IMR-90 (cell line): ENCODE measurements at regions of chr3 and their contacts with region 1.

Region 1: DNA sequence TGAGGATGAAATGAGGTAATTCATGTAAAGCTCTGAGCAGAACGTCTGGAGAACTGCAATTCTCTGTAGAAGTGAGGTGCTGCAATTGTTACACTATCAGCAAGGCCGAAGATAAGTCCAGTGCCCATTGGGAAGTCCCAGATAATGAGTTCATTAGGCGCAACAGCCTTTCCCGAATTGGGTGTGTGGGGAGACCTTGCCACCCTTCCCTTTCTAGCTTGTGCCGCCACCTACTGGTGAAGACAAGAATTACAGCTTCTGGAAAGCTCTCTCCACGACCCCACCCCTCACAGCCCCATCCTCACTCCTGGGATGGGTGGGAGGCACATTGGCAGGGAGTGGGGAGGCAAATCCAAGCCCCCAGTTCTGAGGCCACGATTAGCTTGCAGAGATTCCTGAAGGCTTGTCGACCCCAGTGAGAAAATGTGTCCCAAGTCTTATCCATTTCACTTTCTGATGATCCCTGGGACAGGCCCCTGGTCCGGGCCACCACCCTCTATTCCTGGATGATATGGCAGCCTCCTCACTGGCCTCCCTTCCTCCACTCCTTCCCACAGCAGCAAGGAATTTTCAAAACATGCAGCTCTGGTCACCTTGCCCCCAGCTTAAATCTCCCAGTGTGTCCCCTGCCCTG is 36.4 kb downstream of the FAM3D start:
- DNase-seq: peak; percentile 57
- ATAC-seq: peak; percentile 66
- H3K4me3 ChIP-seq: no peak overlapping the region
- H3K27ac ChIP-seq: no peak overlapping the region
- H3K4me1 ChIP-seq: peaks cover 23% of the 10 kb centered on the region
- H3K27me3 ChIP-seq: no peaks in the 10 kb centered on the region
- CTCF ChIP-seq: peak; percentile 89
- POLR2A ChIP-seq: no peak
- RAD21 ChIP-seq: peak; percentile 85

Region 2: GRCh38 chr3:57889807-57890206 is 740.4 kb before region 1 on chr3:
- CTCF ChIA-PET with region 1: no interaction called
- POLR2A ChIA-PET with region 1: no interaction called
- dilution Hi-C with region 1: no loop called
- in situ Hi-C with region 1: no loop called
- intact Hi-C with region 1: no loop called
- DNase-seq: peak; percentile 18
- ATAC-seq: peak; percentile 67
- H3K4me3 ChIP-seq: no peak overlapping the region
- H3K27ac ChIP-seq: no peak overlapping the region
- H3K4me1 ChIP-seq: no peaks in the 10 kb centered on the region
- H3K27me3 ChIP-seq: no peaks in the 10 kb centered on the region
- CTCF ChIP-seq: no peak
- POLR2A ChIP-seq: no peak
- RAD21 ChIP-seq: no peak

Region 3: GRCh38 chr3:58324391-58325390 is 305.5 kb before region 1 on chr3:
- CTCF ChIA-PET with region 1: no interaction called
- POLR2A ChIA-PET with region 1: no interaction called
- dilution Hi-C with region 1: no loop called
- in situ Hi-C with region 1: loop called (anchors 10 kb)
- intact Hi-C with region 1: no loop called
- DNase-seq: peak; percentile 10
- ATAC-seq: peak; percentile 13
- H3K4me3 ChIP-seq: no peak overlapping the region
- H3K27ac ChIP-seq: peak overlapping the region; percentile 34; the same call in 1 of the 2 replicates
- H3K4me1 ChIP-seq: peaks cover 13% of the 10 kb centered on the region
- H3K27me3 ChIP-seq: no peaks in the 10 kb centered on the region
- CTCF ChIP-seq: no peak
- POLR2A ChIP-seq: no peak
- RAD21 ChIP-seq: no peak

Region 4: DNA sequence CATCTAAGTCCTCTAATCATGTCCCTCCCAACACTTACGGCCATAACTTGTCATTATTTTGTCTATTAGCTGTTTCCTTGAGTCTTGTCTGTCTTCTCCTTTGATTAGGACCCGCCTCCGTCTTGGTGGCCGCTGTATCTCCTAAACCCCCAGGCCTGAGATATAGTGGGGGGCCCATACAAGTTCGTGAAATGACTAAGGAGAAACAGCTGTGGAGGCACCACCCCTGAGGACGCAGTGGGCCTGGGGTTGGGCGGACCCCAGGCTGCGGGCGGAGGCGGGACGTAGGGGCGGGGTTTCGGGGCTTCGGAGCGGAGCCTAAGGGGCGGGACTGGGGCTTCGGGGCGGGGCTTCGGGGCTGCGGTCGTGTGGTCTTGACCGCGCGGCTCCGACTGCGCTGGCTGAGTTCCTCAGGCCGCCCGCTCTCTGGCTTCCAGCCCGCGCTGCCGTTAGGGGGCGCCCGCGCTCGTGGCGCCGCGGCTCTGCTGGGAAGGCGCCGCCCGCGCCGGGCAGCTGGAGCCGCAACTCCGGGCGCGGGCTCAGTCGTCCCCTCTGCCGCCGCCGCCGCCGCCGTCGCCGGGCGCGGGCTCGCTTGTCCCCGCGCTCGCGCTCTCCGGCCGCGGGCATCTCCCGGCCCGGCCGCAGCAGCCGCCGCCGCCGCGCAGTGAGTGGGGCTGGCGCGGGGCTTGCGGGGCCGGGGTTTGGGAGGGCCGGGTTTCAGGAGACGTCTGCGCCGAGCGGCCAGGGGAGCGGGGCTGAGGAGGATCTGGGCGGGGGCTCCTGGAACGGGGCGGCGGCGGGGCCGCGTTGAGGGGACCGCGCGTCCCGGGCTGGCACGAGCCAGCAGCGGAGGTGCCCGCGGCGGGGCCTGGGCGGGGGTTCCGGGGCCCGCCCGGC is 138.4 kb before region 1 on chr3 and contains the start of gene KCTD6:
- CTCF ChIA-PET with region 1: interaction called, 4 read pairs
- POLR2A ChIA-PET with region 1: no interaction called
- dilution Hi-C with region 1: no loop called
- in situ Hi-C with region 1: no loop called
- intact Hi-C with region 1: loop called (anchors 2 kb)
- DNase-seq: peak; percentile 92
- ATAC-seq: peak; percentile 94
- H3K4me3 ChIP-seq: peak within 1 kb of the TSS; percentile 89
- H3K27ac ChIP-seq: peak within 1 kb of the TSS; percentile 60
- H3K4me1 ChIP-seq: peaks cover 13% of the 10 kb centered on the region
- H3K27me3 ChIP-seq: no peaks in the 10 kb centered on the region
- CTCF ChIP-seq: peak; percentile 92
- POLR2A ChIP-seq: no peak
- RAD21 ChIP-seq: peak; percentile 57
- total RNA-seq, gene KCTD6: 7.0 and 9.4 TPM in 2 replicates

Region 5: DNA sequence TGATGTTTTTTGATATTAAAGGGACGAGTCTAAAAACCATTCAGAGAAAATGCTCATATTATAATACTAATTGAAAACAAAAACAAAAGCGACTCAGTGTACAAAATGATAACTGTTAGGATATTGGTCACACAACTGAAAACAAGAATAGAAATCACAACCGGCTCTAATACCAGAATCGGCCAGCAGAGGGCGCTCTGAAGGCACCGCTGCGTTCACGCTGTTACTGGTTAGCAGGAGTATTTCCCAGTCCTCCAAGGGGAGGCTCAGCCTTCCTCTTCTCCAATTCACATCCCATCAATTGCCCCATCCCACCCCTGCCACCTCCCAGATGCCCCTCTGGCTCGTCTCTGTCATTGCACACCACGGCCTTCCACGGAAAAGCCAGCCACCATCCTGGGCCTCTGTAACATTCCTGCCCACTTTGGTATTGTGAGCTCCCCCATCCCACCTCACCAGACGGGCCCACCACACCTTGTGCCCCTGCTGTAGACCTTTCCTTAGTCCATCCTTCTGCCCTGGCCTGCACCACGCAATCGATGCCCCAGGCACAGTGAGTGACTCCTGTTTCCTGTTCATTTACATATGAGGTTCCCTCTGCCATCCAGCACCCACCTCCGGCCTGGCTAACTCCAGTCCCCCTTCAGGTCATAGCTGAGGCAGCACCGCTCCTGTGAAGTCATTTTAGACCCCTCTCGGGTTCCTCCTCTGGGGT is 61.5 kb before region 1 on chr3:
- CTCF ChIA-PET with region 1: interaction called, 69 read pairs
- POLR2A ChIA-PET with region 1: interaction called, 6 read pairs
- dilution Hi-C with region 1: no loop called
- in situ Hi-C with region 1: loop called (anchors 5 kb)
- intact Hi-C with region 1: loop called (anchors 1 kb)
- DNase-seq: peak; percentile 63
- ATAC-seq: peak; percentile 73
- H3K4me3 ChIP-seq: no peak overlapping the region
- H3K27ac ChIP-seq: no peak overlapping the region
- H3K4me1 ChIP-seq: peaks cover 2% of the 10 kb centered on the region; the same call in 1 of the 2 replicates
- H3K27me3 ChIP-seq: no peaks in the 10 kb centered on the region
- CTCF ChIP-seq: peak; percentile 88
- POLR2A ChIP-seq: no peak
- RAD21 ChIP-seq: peak; percentile 73

Region 6: GRCh38 chr3:58640700-58641372 is 10.6 kb after region 1 on chr3:
- CTCF ChIA-PET with region 1: interaction called, 14 read pairs
- POLR2A ChIA-PET with region 1: no interaction called
- dilution Hi-C with region 1: no loop called
- in situ Hi-C with region 1: no loop called
- intact Hi-C with region 1: no loop called
- DNase-seq: peak; percentile 74
- ATAC-seq: peak; percentile 97
- H3K4me3 ChIP-seq: no peak overlapping the region
- H3K27ac ChIP-seq: no peak overlapping the region
- H3K4me1 ChIP-seq: peaks cover 7% of the 10 kb centered on the region; the same call in 1 of the 2 replicates
- H3K27me3 ChIP-seq: no peaks in the 10 kb centered on the region
- CTCF ChIP-seq: peak; percentile 92
- POLR2A ChIP-seq: peak; percentile 27; the same call in 1 of the 2 replicates
- RAD21 ChIP-seq: peak; percentile 98

Region 7: DNA sequence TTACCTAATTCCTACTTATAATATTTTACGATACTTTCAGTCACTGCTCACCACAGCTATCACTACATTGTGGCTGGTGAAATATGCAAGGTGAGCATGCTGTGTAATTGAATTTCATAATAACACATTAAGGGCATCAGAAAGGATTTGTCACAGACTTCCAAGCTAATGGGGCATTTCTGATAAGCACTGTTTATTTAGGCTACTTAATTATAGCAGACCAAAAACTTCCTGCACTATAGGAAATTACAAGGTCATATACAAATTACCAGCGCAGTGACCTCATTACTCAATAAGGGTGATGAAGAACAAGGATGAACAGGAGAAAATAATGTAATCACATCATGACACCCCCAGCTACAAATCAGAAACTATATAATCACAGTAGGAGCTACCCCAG is 125.0 kb after region 1 on chr3:
- CTCF ChIA-PET with region 1: no interaction called
- POLR2A ChIA-PET with region 1: no interaction called
- dilution Hi-C with region 1: no loop called
- in situ Hi-C with region 1: no loop called
- intact Hi-C with region 1: no loop called
- DNase-seq: no peak
- ATAC-seq: no peak
- H3K4me3 ChIP-seq: no peak overlapping the region
- H3K27ac ChIP-seq: no peak overlapping the region
- H3K4me1 ChIP-seq: no peaks in the 10 kb centered on the region
- H3K27me3 ChIP-seq: no peaks in the 10 kb centered on the region
- CTCF ChIP-seq: no peak
- POLR2A ChIP-seq: no peak
- RAD21 ChIP-seq: no peak